ENCODE measurements at regions of chr14 and their contacts with region 1.

Region 1: DNA sequence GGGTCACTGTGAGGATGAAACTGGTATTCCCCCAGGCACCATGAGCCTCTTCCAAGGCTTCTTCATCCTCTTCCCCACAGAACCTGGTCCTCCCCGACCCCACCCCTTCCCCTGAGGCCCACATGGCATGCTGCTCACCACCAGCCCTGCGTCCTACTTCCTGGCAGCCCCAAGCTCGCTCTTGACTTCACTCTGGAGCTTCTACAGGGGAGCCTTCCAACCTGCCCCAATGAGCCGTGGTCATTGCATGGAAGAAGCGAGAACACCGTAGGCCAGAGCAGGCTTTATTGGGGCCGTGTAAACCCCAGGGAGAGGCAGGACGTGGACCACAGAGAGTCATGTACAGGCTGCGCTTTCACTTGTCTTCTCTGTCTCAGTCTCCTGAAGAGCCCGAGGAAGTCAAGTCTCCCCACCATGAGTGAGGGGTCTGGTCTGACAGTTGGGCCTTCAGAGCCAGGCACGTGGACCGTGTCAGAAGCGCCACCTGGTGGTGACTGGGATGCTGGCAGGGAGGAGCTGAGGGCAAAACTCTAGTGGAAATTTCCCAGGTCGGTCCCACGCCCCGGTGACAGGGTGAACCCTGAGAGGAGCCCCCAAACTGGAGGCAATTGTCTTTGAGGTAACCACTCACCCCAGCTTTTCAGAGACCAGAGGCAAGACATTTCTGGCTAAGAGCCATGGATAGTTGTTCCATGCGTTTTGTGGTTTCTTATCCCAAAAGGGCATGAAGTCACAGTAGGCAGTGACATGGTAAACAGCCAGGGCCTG is 17.5 kb downstream of the RPS6KL1 start:
- DNase-seq: peak; percentile 70 to 89 (median 78)
- ATAC-seq: peak; percentile 77
- H3K4me3 ChIP-seq: no peak overlapping the region
- H3K4me3 Mint-ChIP-seq: no peak overlapping the region
- H3K27ac ChIP-seq: no peak overlapping the region
- H3K27ac Mint-ChIP-seq: peak overlapping the region; percentile 73
- H3K4me1 ChIP-seq: peaks cover 13% of the 10 kb centered on the region
- H3K4me1 Mint-ChIP-seq: peaks cover 5% of the 10 kb centered on the region
- H3K27me3 ChIP-seq: no peaks in the 10 kb centered on the region
- H3K27me3 Mint-ChIP-seq: no peaks in the 10 kb centered on the region
- CTCF ChIP-seq: peak; percentile 90

Region 2: DNA sequence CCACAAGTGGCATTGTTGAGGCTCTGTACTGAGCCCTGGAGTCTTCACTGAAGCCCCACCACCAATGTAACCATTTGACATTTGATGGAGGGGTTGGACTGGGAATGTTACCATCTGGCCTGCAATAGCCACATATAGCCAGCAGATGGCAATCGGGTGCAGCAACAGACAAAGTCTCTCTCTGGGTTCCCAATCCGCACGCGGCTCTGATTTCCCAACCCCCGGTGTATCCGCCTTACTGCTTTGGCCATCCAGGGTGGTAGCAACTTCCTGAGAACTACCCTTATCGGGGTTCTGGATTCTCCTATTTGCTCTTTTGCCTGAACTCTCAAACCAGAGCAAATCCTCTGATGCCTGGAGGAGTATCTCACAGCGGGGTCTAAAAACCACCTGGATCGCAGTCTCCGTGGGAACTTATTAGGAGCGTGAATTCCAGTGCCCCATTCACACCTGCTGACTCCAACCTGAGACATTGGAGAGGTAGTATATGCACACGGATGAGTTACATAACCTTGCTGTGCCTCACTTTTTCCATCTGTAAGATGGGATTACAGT is 543.1 kb before region 1 on chr14:
- CTCF ChIA-PET with region 1: no interaction called
- POLR2A ChIA-PET with region 1: no interaction called
- intact Hi-C with region 1: no loop called
- DNase-seq: peak; percentile 40 to 76 (median 54)
- ATAC-seq: peak; percentile 71
- H3K4me3 ChIP-seq: no peak overlapping the region
- H3K4me3 Mint-ChIP-seq: no peak overlapping the region
- H3K27ac ChIP-seq: no peak overlapping the region
- H3K27ac Mint-ChIP-seq: no peak overlapping the region
- H3K4me1 ChIP-seq: peaks cover 6% of the 10 kb centered on the region
- H3K4me1 Mint-ChIP-seq: no peaks in the 10 kb centered on the region
- H3K27me3 ChIP-seq: peaks cover 0 to 5% of the 10 kb centered on the region in 2 experiments
- H3K27me3 Mint-ChIP-seq: peaks cover 10% of the 10 kb centered on the region
- CTCF ChIP-seq: peak; percentile 94

Region 3: DNA sequence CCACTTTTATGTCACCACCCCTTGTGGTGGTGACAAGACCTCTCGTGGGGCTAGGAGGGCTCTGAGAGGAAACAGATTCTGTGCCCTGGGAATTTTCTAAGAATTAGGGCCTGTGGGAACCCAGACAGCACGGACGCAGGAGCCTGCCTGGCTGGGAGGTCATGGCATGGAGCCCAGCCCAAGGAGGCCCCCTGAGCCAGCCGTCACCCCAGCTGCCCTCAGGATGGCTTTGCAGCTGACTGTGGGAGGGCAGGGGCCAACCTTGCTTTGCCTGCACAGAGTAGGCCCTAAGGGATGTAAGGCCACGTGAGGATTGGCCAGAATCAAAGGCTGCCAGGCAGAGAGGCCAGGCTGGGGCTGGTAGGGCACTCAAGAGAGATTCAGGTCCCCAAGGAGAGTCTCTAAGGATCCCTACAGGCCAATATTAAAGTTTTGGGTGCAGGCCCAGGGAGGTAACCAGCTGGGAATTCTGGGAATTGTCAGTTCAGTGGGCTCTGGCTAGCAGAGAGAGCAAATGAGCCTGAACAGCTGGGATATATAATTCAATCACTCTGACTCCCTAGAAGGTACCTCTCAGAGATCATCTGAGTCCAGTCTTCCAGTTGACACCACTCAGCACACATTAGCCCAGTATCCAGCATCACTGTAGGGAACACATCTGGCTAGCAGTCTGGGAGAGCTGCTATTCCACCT is 299.9 kb before region 1 on chr14:
- CTCF ChIA-PET with region 1: interaction called, 5 read pairs
- POLR2A ChIA-PET with region 1: no interaction called
- intact Hi-C with region 1: loop called (anchors 1 to 2 kb)
- DNase-seq: no peak
- ATAC-seq: no peak
- H3K4me3 ChIP-seq: no peak overlapping the region
- H3K4me3 Mint-ChIP-seq: no peak overlapping the region
- H3K27ac ChIP-seq: no peak overlapping the region
- H3K27ac Mint-ChIP-seq: no peak overlapping the region
- H3K4me1 ChIP-seq: peaks cover 9% of the 10 kb centered on the region
- H3K4me1 Mint-ChIP-seq: peaks cover 20% of the 10 kb centered on the region
- H3K27me3 ChIP-seq: no peaks in the 10 kb centered on the region
- H3K27me3 Mint-ChIP-seq: peaks cover 6% of the 10 kb centered on the region
- CTCF ChIP-seq: no peak

Region 4: GRCh38 chr14:74860906-74861733 is 44.4 kb before region 1 on chr14:
- CTCF ChIA-PET with region 1: interaction called, 160 read pairs
- POLR2A ChIA-PET with region 1: interaction called, 43 read pairs
- intact Hi-C with region 1: loop called (anchors 1 kb)
- DNase-seq: peak; percentile 83 to 98 (median 92)
- ATAC-seq: peak; percentile 88
- H3K4me3 ChIP-seq: no peak overlapping the region
- H3K4me3 Mint-ChIP-seq: no peak overlapping the region
- H3K27ac ChIP-seq: no peak overlapping the region
- H3K27ac Mint-ChIP-seq: no peak overlapping the region
- H3K4me1 ChIP-seq: peaks cover 8% of the 10 kb centered on the region
- H3K4me1 Mint-ChIP-seq: peaks cover 7% of the 10 kb centered on the region
- H3K27me3 ChIP-seq: no peaks in the 10 kb centered on the region
- H3K27me3 Mint-ChIP-seq: no peaks in the 10 kb centered on the region
- CTCF ChIP-seq: peak; percentile 88

Region 5: GRCh38 chr14:74881431-74882361 is 23.9 kb before region 1 on chr14 and contains the start of gene DLST:
- CTCF ChIA-PET with region 1: interaction called, 21 read pairs
- POLR2A ChIA-PET with region 1: interaction called, 3 read pairs
- intact Hi-C with region 1: loop called (anchors 2 kb)
- DNase-seq: peak; percentile 70 to 92 (median 80)
- ATAC-seq: peak; percentile 63
- H3K4me3 ChIP-seq: peak within 1 kb of the TSS; percentile 95
- H3K4me3 Mint-ChIP-seq: peak within 1 kb of the TSS; percentile 99
- H3K27ac ChIP-seq: peak within 1 kb of the TSS; percentile 82 to 88
- H3K27ac Mint-ChIP-seq: peak within 1 kb of the TSS; percentile 92
- H3K4me1 ChIP-seq: peaks cover 53% of the 10 kb centered on the region
- H3K4me1 Mint-ChIP-seq: peaks cover 70% of the 10 kb centered on the region
- H3K27me3 ChIP-seq: no peaks in the 10 kb centered on the region
- H3K27me3 Mint-ChIP-seq: no peaks in the 10 kb centered on the region
- CTCF ChIP-seq: no peak
- total RNA-seq, gene DLST: 162 to 170 TPM

Region 6: GRCh38 chr14:74973003-74973653 is 67.6 kb after region 1 on chr14:
- CTCF ChIA-PET with region 1: no interaction called
- POLR2A ChIA-PET with region 1: no interaction called
- intact Hi-C with region 1: no loop called
- DNase-seq: peak in 3 of 14 experiments; percentile 8 to 28 (median 9)
- ATAC-seq: no peak
- H3K4me3 ChIP-seq: no peak overlapping the region
- H3K4me3 Mint-ChIP-seq: no peak overlapping the region
- H3K27ac ChIP-seq: no peak overlapping the region
- H3K27ac Mint-ChIP-seq: no peak overlapping the region
- H3K4me1 ChIP-seq: peaks cover 4% of the 10 kb centered on the region
- H3K4me1 Mint-ChIP-seq: no peaks in the 10 kb centered on the region
- H3K27me3 ChIP-seq: no peaks in the 10 kb centered on the region
- H3K27me3 Mint-ChIP-seq: no peaks in the 10 kb centered on the region
- CTCF ChIP-seq: no peak

Region 7: GRCh38 chr14:75088574-75089373 is 183.2 kb after region 1 on chr14:
- CTCF ChIA-PET with region 1: interaction called, 7 read pairs
- POLR2A ChIA-PET with region 1: no interaction called
- intact Hi-C with region 1: loop called in 1 of 2 experiments (anchors 2 kb)
- DNase-seq: peak in 10 of 14 experiments; percentile 8 to 71 (median 31)
- ATAC-seq: peak; percentile 72
- H3K4me3 ChIP-seq: no peak overlapping the region
- H3K4me3 Mint-ChIP-seq: no peak overlapping the region
- H3K27ac ChIP-seq: no peak overlapping the region
- H3K27ac Mint-ChIP-seq: no peak overlapping the region
- H3K4me1 ChIP-seq: no peaks in the 10 kb centered on the region
- H3K4me1 Mint-ChIP-seq: no peaks in the 10 kb centered on the region
- H3K27me3 ChIP-seq: no peaks in the 10 kb centered on the region
- H3K27me3 Mint-ChIP-seq: no peaks in the 10 kb centered on the region
- CTCF ChIP-seq: peak; percentile 84